Caco-2 (cell line): ENCODE measurements at regions of chr13 and their contacts with region 1.

Region 1: GRCh38 chr13:97018029-97018831 is 24.0 kb upstream of the OXGR1 start:
- DNase-seq: peak; percentile 52 to 59
- H3K4me3 ChIP-seq: no peak overlapping the region
- H3K4me3 Mint-ChIP-seq: peak overlapping the region; percentile 58
- H3K27ac Mint-ChIP-seq: no peak overlapping the region
- H3K4me1 ChIP-seq: peaks cover 21% of the 10 kb centered on the region
- H3K4me1 Mint-ChIP-seq: peaks cover 11% of the 10 kb centered on the region
- H3K27me3 ChIP-seq: no peaks in the 10 kb centered on the region
- H3K27me3 Mint-ChIP-seq: peaks cover 7% of the 10 kb centered on the region
- CTCF ChIP-seq: peak; percentile 79 to 91

Region 2: DNA sequence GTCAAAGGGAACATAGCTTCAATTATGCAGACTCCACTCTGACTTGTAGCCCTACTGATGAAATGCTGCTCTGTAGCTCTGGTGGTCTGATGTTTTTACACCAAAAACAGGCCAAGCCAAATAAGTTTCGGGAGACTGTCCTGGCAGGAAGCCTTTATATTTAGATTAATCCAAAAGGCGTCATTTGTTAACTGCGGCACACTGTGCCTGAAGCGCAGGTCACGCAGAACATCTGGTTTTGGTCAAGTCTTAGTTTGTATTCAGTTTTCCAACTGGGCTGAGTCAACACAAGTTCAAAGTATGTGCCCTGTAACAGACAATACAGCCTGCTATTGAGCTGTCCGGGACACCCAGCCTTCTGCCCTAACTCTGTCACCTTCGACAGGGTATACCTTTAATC is 780.6 kb after region 1 on chr13:
- CTCF ChIA-PET with region 1: no interaction called
- POLR2A ChIA-PET with region 1: no interaction called
- intact Hi-C with region 1: loop called (anchors 1 kb)
- DNase-seq: no peak
- H3K4me3 ChIP-seq: no peak overlapping the region
- H3K4me3 Mint-ChIP-seq: no peak overlapping the region
- H3K27ac Mint-ChIP-seq: no peak overlapping the region
- H3K4me1 ChIP-seq: no peaks in the 10 kb centered on the region
- H3K4me1 Mint-ChIP-seq: no peaks in the 10 kb centered on the region
- H3K27me3 ChIP-seq: no peaks in the 10 kb centered on the region
- H3K27me3 Mint-ChIP-seq: no peaks in the 10 kb centered on the region
- CTCF ChIP-seq: no peak